PC-9 (cell line): ENCODE measurements at regions of chr15 and their contacts with region 1.

Region 1: DNA sequence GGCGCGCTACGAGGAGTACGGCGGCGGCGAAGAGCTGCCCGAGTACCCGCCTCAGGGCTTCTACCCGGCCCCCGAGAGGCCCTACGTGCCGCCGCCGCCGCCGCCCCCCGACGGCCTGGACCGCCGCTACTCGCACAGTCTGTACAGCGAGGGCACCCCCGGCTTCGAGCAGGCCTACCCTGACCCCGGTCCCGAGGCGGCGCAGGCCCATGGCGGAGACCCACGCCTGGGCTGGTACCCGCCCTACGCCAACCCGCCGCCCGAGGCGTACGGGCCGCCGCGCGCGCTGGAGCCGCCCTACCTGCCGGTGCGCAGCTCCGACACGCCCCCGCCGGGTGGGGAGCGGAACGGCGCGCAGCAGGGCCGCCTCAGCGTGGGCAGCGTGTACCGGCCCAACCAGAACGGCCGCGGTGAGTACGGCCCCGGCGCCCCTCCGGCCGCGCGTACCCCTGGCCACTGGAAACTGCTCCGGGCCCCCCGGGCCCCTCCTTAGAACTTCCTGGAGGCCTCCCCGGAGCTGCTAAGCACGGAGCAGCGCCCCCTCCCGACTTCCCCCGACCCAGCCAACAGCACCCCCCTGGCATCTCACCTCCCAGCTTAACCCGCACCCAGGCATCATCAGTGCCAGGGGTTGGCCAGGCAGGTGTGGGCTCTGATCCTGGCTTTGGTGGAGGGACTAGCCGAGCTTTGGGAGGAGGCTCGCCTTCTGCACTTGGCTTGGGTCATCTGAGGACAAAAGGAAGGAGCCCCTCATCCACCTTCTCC is 1.4 kb downstream of the LOXL1 start:
- DNase-seq: peak; percentile 49 to 78
- H3K4me3 ChIP-seq: peak overlapping the region; percentile 62
- H3K27ac ChIP-seq: peak overlapping the region; percentile 54
- H3K4me1 ChIP-seq: peaks cover 62% of the 10 kb centered on the region
- H3K27me3 ChIP-seq: no peaks in the 10 kb centered on the region
- CTCF ChIP-seq: peak; percentile 76

Region 2: GRCh38 chr15:73190189-73190601 is 737.5 kb before region 1 on chr15:
- CTCF ChIA-PET with region 1: interaction called, 19 read pairs
- POLR2A ChIA-PET with region 1: no interaction called
- intact Hi-C with region 1: no loop called
- DNase-seq: no peak
- H3K4me3 ChIP-seq: no peak overlapping the region
- H3K27ac ChIP-seq: no peak overlapping the region
- H3K4me1 ChIP-seq: no peaks in the 10 kb centered on the region
- H3K27me3 ChIP-seq: no peaks in the 10 kb centered on the region
- CTCF ChIP-seq: no peak

Region 3: DNA sequence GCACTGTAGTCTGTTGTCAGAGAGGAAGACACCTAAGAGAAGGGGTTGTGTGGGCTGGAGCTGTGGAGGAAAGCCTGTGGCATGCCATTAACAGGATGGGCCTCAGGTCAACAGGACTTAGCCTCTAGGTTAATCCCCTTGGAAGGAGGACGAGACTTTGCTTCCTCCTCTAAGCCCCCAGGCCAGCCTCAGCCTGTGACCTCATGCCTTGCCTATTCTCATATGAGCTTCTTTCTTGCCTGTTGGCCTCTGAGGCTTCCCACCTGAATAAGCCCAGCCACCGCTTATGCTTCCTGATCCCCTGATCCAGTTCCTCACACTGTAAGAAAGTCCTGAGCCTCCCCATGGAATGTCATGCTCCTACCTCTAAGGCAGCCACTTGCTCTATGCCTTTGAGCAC is 106.5 kb before region 1 on chr15:
- CTCF ChIA-PET with region 1: interaction called, 14 read pairs
- POLR2A ChIA-PET with region 1: no interaction called
- intact Hi-C with region 1: no loop called
- DNase-seq: no peak
- H3K4me3 ChIP-seq: no peak overlapping the region
- H3K27ac ChIP-seq: no peak overlapping the region
- H3K4me1 ChIP-seq: no peaks in the 10 kb centered on the region
- H3K27me3 ChIP-seq: peaks cover 82% of the 10 kb centered on the region
- CTCF ChIP-seq: no peak

Region 4: DNA sequence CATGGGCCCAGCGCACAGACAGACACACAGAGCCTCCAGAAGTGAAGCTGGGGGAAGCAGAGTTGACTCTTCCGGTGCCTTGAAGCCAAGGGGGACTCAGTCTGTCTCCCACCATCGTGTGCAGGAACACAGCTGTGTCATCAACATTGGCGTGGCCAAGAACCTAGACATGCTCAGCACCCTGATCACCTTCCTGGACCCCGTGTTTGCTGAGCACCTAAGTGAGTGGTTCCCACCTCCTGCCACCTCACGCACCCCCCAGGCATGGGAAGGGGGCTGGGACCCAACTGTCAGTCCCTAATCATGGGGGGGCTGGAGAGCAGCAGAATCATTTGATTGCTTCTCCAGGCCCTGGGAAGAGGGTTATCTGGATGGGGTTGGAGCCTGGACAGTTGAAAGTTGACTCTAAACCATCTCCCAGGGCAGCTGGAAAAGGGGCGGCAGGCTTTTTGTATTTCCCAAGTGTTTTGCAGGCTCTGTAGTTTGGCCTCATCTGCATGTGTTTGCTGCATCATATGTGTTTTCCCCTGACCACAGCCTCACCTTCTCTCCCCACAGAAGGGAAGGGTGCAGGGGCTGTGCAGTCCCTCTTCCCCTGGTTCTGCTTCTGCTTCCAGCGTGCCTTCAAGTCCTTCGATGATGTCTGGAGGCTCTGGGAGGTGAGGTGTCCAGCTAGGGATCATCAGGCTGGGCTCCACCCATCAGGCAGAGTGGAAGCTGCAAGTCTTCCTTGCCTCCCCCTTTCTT is 41.5 kb before region 1 on chr15:
- CTCF ChIA-PET with region 1: no interaction called
- POLR2A ChIA-PET with region 1: no interaction called
- intact Hi-C with region 1: no loop called
- DNase-seq: no peak
- H3K4me3 ChIP-seq: no peak overlapping the region
- H3K27ac ChIP-seq: no peak overlapping the region
- H3K4me1 ChIP-seq: no peaks in the 10 kb centered on the region
- H3K27me3 ChIP-seq: peaks cover 70% of the 10 kb centered on the region
- CTCF ChIP-seq: no peak

Region 5: DNA sequence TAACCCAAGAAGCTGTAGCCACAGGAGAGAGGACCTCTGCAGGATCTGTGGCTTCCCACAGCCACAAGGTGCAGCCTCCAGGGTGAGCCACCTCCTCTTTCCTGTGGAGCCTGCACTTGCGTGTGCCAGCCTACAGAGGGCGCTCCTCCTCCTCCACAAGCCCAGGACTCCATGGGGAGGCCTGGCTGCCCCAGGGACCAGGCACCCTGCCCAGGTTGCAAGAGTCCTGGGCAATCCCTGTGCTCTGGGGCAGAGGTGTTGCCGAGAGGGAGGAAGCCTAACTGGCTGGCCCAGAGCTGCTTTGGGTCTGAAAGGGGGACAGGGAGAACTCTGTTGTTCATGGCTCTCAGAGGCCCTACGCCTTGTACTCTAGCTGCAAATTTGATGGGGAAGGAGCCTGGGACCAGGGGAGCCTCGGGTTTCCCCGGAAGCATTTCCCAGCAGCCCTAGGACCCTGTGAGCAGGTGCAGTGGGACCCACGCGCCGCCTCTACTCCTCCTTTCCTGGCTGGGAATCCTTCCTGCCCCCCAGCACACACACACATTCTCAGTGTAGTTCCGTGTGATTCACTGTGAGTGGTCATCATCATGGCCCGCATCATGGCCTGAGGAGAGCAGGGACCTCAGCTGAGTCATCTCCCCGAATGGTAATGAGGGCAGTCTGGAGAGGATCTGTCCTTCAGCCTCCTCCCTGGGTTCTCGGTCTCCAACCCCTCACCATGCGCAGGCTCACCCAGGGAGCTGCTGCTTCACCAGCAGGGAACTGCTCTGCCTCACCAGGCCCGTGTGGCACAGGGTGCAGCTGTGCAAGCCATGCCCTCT is 30.0 kb before region 1 on chr15:
- CTCF ChIA-PET with region 1: no interaction called
- POLR2A ChIA-PET with region 1: no interaction called
- intact Hi-C with region 1: loop called (anchors 2 kb)
- DNase-seq: peak; percentile 58 to 61
- H3K4me3 ChIP-seq: no peak overlapping the region
- H3K27ac ChIP-seq: peak overlapping the region; percentile 62
- H3K4me1 ChIP-seq: peaks cover 18% of the 10 kb centered on the region
- H3K27me3 ChIP-seq: no peaks in the 10 kb centered on the region
- CTCF ChIP-seq: peak; percentile 98

Region 6: DNA sequence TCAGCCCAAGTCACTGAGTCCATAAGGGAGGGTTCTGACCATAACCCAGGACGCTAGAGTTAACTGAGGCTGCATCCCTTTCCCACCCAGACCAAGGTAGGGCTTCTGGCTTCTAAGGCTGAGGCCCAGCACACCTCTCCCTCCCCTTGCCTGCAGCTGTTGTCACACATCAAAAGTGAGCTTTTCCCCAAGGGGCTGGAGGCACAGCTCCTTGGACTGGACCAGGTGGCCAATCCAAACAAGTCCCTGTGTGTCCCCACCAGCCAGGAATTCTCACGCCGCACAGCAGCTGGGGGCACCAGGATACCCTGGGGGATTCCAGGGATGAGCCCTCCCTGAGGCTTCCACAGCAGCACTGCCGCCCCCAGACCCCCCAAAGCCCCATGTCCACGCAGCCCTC is 180.5 kb after region 1 on chr15:
- CTCF ChIA-PET with region 1: no interaction called
- POLR2A ChIA-PET with region 1: no interaction called
- intact Hi-C with region 1: no loop called
- DNase-seq: no peak
- H3K4me3 ChIP-seq: no peak overlapping the region
- H3K27ac ChIP-seq: no peak overlapping the region
- H3K4me1 ChIP-seq: peaks cover 10% of the 10 kb centered on the region; the same call in 1 of the 2 replicates
- H3K27me3 ChIP-seq: no peaks in the 10 kb centered on the region
- CTCF ChIP-seq: no peak